ENCODE measurements at regions of chr10 and their contacts with region 1.

Region 1: GRCh38 chr10:127906548-127907377 is at the start of gene PTPRE:
- DNase-seq: peak; percentile 89
- H3K27ac ChIP-seq: peak within 1 kb of the TSS; percentile 74
- CTCF ChIP-seq: peak; percentile 98

Region 2: DNA sequence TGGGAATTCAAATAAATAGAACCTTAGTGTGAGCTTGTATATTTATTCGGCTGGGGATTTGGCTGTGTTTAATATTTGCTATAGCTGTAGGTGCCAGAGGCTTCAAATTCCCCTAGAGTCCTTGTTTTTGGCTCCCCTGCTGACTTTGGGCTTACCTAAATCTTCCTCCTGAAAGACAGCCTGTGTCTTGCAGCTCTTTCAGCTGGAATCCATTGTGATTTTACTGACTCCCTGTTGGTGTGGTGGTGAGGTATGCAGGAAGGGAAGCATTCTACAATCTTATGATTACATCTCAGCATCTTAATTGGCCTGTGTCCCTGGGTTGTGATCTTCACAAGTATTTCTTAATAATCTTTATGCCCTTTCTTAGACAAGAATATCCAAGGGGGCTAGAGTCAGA is 143.8 kb before region 1 on chr10:
- CTCF ChIA-PET with region 1: no interaction called
- POLR2A ChIA-PET with region 1: no interaction called
- DNase-seq: no peak
- H3K27ac ChIP-seq: no peak overlapping the region
- CTCF ChIP-seq: no peak

Region 3: GRCh38 chr10:128035557-128035973 is 128.8 kb after region 1 on chr10:
- CTCF ChIA-PET with region 1: no interaction called
- POLR2A ChIA-PET with region 1: no interaction called
- DNase-seq: no peak
- H3K27ac ChIP-seq: no peak overlapping the region; the same call in 1 of the 2 replicates
- CTCF ChIP-seq: no peak; the same call in 1 of the 2 replicates

Region 4: DNA sequence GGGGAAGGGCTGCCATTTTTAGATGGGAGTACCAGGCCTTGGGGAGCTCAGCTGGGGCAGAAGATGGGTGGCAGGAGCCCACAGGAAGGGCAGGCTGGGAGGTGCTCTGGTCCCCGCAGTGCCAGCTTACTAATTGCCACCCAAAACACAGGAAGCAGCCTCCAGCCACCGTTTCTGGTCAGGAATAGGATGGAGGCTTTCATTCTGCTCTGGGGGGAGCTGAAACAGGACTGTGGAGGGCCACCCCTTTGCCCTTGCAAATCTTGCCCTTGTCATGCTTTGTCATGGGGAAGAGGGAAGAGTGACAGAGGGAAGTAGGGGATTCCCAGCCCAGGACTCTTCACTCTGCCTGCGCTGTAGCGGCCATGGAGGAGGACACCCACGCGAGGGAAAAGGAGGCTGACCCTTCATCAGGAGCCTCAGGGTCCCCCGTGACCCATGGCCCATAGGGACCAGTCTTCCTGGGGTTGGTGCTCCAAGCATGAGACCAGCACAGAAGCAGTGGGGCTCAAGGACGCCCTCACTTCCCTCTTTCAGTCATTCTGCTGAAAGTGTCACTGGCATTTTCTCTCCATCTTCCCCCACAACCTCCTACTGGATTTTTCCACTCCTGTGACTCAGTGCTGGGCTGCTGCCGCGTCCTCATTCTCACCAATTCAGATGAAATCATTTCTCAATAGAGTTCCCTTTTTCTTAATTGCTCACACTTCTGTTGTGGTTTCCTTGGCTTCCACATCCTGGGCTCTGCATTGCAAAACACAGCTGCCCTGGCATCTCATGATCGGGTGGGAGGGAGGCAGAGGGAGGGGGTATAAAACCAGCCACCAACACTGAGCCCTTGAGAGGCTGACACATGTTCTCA is 157.6 kb after region 1 on chr10:
- CTCF ChIA-PET with region 1: interaction called, 33 read pairs
- POLR2A ChIA-PET with region 1: no interaction called
- DNase-seq: peak; percentile 80
- H3K27ac ChIP-seq: peak overlapping the region; percentile 100
- CTCF ChIP-seq: no peak

Measured in RWPE1 (cell line).